B cell (primary cell): ENCODE measurements at regions of chr20 and their contacts with region 1.

Region 1: GRCh38 chr20:40990542-40991120 is 38.0 kb upstream of the TOP1 start:
- DNase-seq: peak; percentile 71
- ATAC-seq: peak; percentile 20
- H3K4me3 ChIP-seq: no peak overlapping the region
- H3K4me3 Mint-ChIP-seq: peak overlapping the region; percentile 86
- H3K27ac ChIP-seq: peak overlapping the region; percentile 35 to 51
- H3K27ac Mint-ChIP-seq: peak overlapping the region; percentile 99
- H3K4me1 ChIP-seq: peaks cover 43 to 48% of the 10 kb centered on the region in 2 donors
- H3K4me1 Mint-ChIP-seq: peaks cover 51% of the 10 kb centered on the region
- H3K27me3 ChIP-seq: no peaks in the 10 kb centered on the region
- H3K27me3 Mint-ChIP-seq: no peaks in the 10 kb centered on the region
- CTCF ChIP-seq: peak; percentile 53

Region 2: DNA sequence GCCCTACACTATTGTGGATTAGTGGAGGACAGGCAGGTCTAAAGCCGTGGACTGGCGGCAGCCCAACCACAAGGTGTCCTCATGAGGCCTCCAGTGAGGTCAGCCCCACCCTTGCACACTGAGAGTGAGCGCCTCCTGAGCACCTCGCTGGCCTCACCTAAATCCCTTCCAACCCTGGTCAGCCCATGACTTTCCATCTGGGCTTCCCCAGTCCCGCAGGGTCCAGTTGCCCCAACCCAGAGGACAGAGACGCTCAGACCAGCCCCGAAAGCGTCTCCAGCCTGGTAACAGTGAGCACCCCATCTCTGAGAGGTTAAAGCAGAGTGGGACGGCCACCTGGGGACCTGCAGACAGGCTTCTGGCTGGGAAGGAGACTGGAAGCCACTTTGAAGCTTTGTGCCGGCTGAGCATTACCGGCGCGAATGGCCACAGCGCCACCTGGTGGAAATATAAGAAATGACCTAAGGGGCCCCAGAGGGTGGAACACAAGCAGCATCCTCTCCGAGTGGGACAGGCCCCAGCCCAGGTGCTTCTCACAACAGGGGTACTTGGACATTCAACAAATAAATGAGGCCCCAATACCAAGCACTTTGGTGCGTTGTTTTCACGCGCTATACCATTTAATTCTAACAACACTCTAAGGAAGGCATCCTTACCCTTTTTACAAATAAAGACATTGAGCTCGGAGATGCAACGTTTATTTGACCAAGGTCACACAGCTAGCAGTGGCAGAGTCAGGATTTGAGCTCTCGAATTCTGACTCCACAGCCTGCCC is 27.7 kb before region 1 on chr20:
- CTCF ChIA-PET with region 1: interaction called, 89 read pairs
- POLR2A ChIA-PET with region 1: no interaction called
- intact Hi-C with region 1: loop called (anchors 1 kb)
- DNase-seq: peak; percentile 80
- ATAC-seq: peak; percentile 70
- H3K4me3 ChIP-seq: no peak overlapping the region
- H3K4me3 Mint-ChIP-seq: no peak overlapping the region
- H3K27ac ChIP-seq: no peak overlapping the region
- H3K27ac Mint-ChIP-seq: no peak overlapping the region
- H3K4me1 ChIP-seq: peaks cover 0 to 5% of the 10 kb centered on the region in 2 donors
- H3K4me1 Mint-ChIP-seq: peaks cover 3% of the 10 kb centered on the region
- H3K27me3 ChIP-seq: peaks cover 0 to 4% (median 0%) of the 10 kb centered on the region in 4 experiments
- H3K27me3 Mint-ChIP-seq: peaks cover 3% of the 10 kb centered on the region
- CTCF ChIP-seq: peak; percentile 90

Region 3: DNA sequence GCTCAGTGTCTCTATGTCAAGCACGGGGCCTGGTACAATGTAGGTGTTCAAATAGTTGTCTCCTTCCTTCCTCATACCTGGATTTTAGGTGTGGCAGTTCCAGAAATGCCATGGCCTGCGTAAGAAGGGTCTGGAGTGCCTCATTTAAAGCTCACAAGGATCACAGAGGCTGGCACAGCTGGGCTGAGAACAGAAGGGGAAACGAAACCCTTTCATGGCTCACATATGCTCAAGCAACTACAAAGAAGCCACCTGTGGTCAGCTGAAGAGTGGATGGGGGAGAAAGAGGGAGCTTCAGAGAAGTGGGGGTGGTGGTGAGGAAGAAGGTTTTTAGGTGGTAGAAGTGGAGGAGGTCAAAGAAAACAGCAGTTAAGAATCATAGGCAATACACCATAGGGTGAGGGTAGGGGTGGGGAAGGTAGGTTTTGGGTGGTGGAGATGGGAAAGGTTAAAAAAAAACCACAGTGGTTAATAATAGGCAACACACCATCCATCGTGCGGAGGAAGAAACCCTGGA is 21.0 kb after region 1 on chr20:
- CTCF ChIA-PET with region 1: interaction called, 62 read pairs
- POLR2A ChIA-PET with region 1: interaction called, 32 read pairs
- intact Hi-C with region 1: loop called (anchors 1 kb)
- DNase-seq: peak; percentile 86
- ATAC-seq: peak; percentile 98
- H3K4me3 ChIP-seq: peak overlapping the region in 1 of 5 experiments; percentile 35
- H3K4me3 Mint-ChIP-seq: peak overlapping the region; percentile 52
- H3K27ac ChIP-seq: peak overlapping the region in 1 of 2 donors; percentile 4
- H3K27ac Mint-ChIP-seq: peak overlapping the region; percentile 47
- H3K4me1 ChIP-seq: peaks cover 36 to 43% of the 10 kb centered on the region in 2 donors
- H3K4me1 Mint-ChIP-seq: peaks cover 40% of the 10 kb centered on the region
- H3K27me3 ChIP-seq: no peaks in the 10 kb centered on the region
- H3K27me3 Mint-ChIP-seq: no peaks in the 10 kb centered on the region
- CTCF ChIP-seq: no peak

Region 4: GRCh38 chr20:41028348-41029148 is 37.9 kb after region 1 on chr20 and contains the start of gene TOP1:
- CTCF ChIA-PET with region 1: interaction called, 20 read pairs
- POLR2A ChIA-PET with region 1: interaction called, 6 read pairs
- intact Hi-C with region 1: loop called (anchors 1 kb)
- DNase-seq: peak; percentile 100
- ATAC-seq: peak; percentile 98
- H3K4me3 ChIP-seq: peak within 1 kb of the TSS; percentile 73 to 94 (median 93)
- H3K4me3 Mint-ChIP-seq: peak within 1 kb of the TSS; percentile 93
- H3K27ac ChIP-seq: peak within 1 kb of the TSS; percentile 71 to 95
- H3K27ac Mint-ChIP-seq: peak within 1 kb of the TSS; percentile 97
- H3K4me1 ChIP-seq: peaks cover 38 to 40% of the 10 kb centered on the region in 2 donors
- H3K4me1 Mint-ChIP-seq: peaks cover 53% of the 10 kb centered on the region
- H3K27me3 ChIP-seq: no peaks in the 10 kb centered on the region
- H3K27me3 Mint-ChIP-seq: no peaks in the 10 kb centered on the region
- CTCF ChIP-seq: no peak
- total RNA-seq, gene TOP1: 44.9 and 45.9 TPM in 2 replicates

Region 5: DNA sequence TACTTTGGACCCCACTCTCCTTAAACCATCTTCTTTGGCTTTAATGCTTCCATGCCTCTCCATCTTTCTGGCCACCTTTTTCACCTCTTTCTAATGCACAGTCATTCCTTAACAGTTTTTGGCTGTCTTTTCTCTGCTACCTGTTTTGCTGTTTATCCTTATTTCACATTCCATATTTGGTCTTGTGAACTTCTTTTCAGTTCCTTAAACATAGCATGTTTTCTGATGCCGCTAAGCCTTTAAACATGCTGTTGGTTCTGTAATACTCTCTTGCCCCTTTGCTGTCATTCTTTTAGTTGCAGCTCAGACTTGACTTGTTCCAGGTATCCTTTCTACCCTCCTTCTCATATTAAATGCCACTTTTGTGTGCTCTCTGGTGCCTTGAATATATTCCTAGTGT is 73.7 kb after region 1 on chr20:
- CTCF ChIA-PET with region 1: interaction called, 112 read pairs
- POLR2A ChIA-PET with region 1: interaction called, 4 read pairs
- intact Hi-C with region 1: loop called (anchors 1 kb)
- DNase-seq: peak; percentile 39
- ATAC-seq: peak; percentile 57
- H3K4me3 ChIP-seq: no peak overlapping the region
- H3K4me3 Mint-ChIP-seq: peak overlapping the region; percentile 24
- H3K27ac ChIP-seq: no peak overlapping the region
- H3K27ac Mint-ChIP-seq: peak overlapping the region; percentile 27
- H3K4me1 ChIP-seq: peaks cover 19 to 23% of the 10 kb centered on the region in 2 donors
- H3K4me1 Mint-ChIP-seq: peaks cover 46% of the 10 kb centered on the region
- H3K27me3 ChIP-seq: no peaks in the 10 kb centered on the region
- H3K27me3 Mint-ChIP-seq: no peaks in the 10 kb centered on the region
- CTCF ChIP-seq: no peak

Region 6: GRCh38 chr20:41095110-41095969 is 104.7 kb after region 1 on chr20:
- CTCF ChIA-PET with region 1: interaction called, 174 read pairs
- POLR2A ChIA-PET with region 1: no interaction called
- intact Hi-C with region 1: loop called (anchors 1 kb)
- DNase-seq: peak; percentile 76
- ATAC-seq: peak; percentile 74
- H3K4me3 ChIP-seq: no peak overlapping the region
- H3K4me3 Mint-ChIP-seq: no peak overlapping the region
- H3K27ac ChIP-seq: no peak overlapping the region
- H3K27ac Mint-ChIP-seq: no peak overlapping the region
- H3K4me1 ChIP-seq: no peaks in the 10 kb centered on the region
- H3K4me1 Mint-ChIP-seq: no peaks in the 10 kb centered on the region
- H3K27me3 ChIP-seq: no peaks in the 10 kb centered on the region
- H3K27me3 Mint-ChIP-seq: no peaks in the 10 kb centered on the region
- CTCF ChIP-seq: peak; percentile 96